HepG2 (cell line): ENCODE measurements at regions of chr3 and their contacts with region 1.

Region 1: GRCh38 chr3:46923559-46924350 is 46.2 kb downstream of the PTH1R start:
- DNase-seq: peak; percentile 31
- ATAC-seq: peak; percentile 77
- H3K4me3 ChIP-seq: no peak overlapping the region
- H3K27ac ChIP-seq: no peak overlapping the region
- H3K4me1 ChIP-seq: no peaks in the 10 kb centered on the region
- H3K27me3 ChIP-seq: no peaks in the 10 kb centered on the region
- CTCF ChIP-seq: peak; percentile 78
- EP300 ChIP-seq: no peak
- POLR2A ChIP-seq: no peak
- RAD21 ChIP-seq: peak; percentile 87

Region 2: DNA sequence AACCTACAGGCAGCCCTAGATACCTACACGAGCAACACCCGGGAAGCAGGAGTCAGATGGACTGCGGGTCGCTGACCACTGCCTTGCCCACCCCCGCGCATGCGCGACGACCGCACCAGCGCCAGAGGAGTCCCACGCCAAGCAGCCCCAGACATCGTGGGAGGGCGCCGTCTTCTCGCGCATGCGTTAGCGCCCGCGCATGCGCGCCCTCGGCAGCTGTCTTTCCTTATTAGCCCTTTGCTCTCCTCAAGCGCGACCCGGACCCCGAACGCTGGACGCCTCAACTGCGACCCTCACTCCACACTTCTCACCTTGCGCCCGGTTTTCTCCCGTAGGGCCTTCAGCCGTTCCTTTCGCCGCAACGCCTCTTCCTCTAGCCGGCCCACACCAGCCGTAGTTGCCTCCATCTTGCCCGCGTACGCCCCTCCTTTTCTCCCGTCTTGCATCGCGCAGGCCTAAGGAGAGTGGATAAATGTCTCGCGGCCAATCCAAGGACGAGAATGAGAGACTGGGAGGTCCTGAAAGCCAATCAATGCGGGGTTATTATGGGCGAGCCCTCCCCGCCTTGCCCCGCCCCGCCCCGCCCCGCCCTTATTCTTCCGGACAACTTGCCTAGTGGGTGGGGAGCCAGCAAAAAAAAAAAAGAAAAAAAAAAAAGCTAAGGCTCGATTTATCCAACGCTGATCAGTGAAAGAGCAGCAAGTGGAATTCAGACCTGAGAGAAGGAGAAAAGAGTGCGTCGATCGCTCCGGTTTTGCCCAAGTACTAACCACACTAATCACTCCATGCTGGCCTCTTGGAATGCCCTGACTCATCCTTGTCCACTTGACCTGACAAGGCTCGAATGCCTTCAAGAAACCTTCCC is 52.8 kb after region 1 on chr3 and contains the start of gene CCDC12:
- CTCF ChIA-PET with region 1: no interaction called
- POLR2A ChIA-PET with region 1: interaction called, 4 read pairs
- in situ Hi-C with region 1: no loop called
- intact Hi-C with region 1: loop called (anchors 10 kb)
- DNase-seq: peak; percentile 98
- ATAC-seq: peak; percentile 79
- H3K4me3 ChIP-seq: peak within 1 kb of the TSS; percentile 69 to 98 (median 79); a peak in 5 of 6 replicates
- H3K27ac ChIP-seq: peak within 1 kb of the TSS; percentile 97
- H3K4me1 ChIP-seq: peaks cover 70% of the 10 kb centered on the region
- H3K27me3 ChIP-seq: no peaks in the 10 kb centered on the region; a peak in 1 of 5 replicates
- CTCF ChIP-seq: no peak
- EP300 ChIP-seq: no peak
- POLR2A ChIP-seq: peak in 1 of 2 experiments; percentile 85; a peak in 2 of 4 replicates
- RAD21 ChIP-seq: no peak
- total RNA-seq, gene CCDC12: 49.5 and 55.2 TPM in 2 replicates

Region 3: GRCh38 chr3:46998121-46998851 is 74.5 kb after region 1 on chr3:
- CTCF ChIA-PET with region 1: interaction called, 27 read pairs
- POLR2A ChIA-PET with region 1: no interaction called
- in situ Hi-C with region 1: no loop called
- intact Hi-C with region 1: no loop called
- DNase-seq: peak; percentile 47
- ATAC-seq: peak; percentile 86
- H3K4me3 ChIP-seq: no peak overlapping the region
- H3K27ac ChIP-seq: no peak overlapping the region
- H3K4me1 ChIP-seq: peaks cover 12% of the 10 kb centered on the region
- H3K27me3 ChIP-seq: no peaks in the 10 kb centered on the region
- CTCF ChIP-seq: peak; percentile 99
- EP300 ChIP-seq: no peak
- POLR2A ChIP-seq: no peak
- RAD21 ChIP-seq: peak; percentile 97